Heart left ventricle (tissue), 16 donors: ENCODE measurements at regions of chr10 and their contacts with region 1.

Region 1: DNA sequence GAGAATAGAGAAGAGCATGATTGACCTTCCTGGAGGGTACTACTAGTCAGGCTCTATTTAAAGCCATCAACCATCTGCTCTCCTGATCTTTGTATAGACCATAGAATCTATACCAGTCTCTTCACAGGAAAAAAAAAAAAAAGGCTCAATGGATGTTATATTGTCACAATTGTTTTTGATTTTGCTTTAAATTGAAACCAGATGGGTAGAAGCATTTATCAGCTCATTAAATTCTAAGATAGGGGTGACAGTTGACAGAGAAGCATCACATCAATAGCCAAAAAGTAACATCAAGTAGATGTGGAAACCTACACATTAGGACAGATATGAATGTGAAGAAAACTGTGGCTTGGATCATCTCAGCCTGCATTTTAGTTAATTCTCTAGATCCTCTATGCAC is 558.9 kb upstream of the MBL2 start:
- DNase-seq: no peak
- ATAC-seq: no peak
- H3K4me3 ChIP-seq: no peak overlapping the region
- H3K27ac ChIP-seq: no peak overlapping the region
- H3K4me1 ChIP-seq: no peaks in the 10 kb centered on the region
- H3K27me3 ChIP-seq: no peaks in the 10 kb centered on the region
- CTCF ChIP-seq: no peak
- POLR2A ChIP-seq: no peak

Region 2: DNA sequence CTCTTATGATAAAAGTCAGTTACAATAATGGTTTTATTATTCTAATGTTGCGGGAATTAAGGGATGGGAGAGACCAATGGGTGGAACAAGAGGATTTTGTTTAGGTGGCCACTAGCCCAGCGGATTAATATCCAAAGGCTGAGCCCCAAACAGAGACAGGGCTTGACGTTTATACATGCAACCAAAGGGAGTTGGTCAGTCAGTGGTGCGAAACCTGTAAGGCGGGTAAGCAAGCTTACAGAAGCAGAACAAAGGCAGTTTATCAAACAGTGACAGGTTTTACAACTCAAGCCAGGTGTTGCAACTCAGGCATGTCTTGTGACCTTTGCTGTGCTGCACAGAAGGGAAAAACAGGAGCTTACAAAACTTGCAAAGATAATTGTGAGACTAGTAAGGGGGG is 64.0 kb after region 1 on chr10:
- intact Hi-C with region 1: loop called in 1 of 10 experiments (anchors 10 kb)
- DNase-seq: no peak
- ATAC-seq: no peak
- H3K4me3 ChIP-seq: no peak overlapping the region
- H3K27ac ChIP-seq: no peak overlapping the region
- H3K4me1 ChIP-seq: no peaks in the 10 kb centered on the region
- H3K27me3 ChIP-seq: no peaks in the 10 kb centered on the region
- CTCF ChIP-seq: no peak
- POLR2A ChIP-seq: no peak